ENCODE measurements at regions of chr5 and their contacts with region 1.

Region 1: DNA sequence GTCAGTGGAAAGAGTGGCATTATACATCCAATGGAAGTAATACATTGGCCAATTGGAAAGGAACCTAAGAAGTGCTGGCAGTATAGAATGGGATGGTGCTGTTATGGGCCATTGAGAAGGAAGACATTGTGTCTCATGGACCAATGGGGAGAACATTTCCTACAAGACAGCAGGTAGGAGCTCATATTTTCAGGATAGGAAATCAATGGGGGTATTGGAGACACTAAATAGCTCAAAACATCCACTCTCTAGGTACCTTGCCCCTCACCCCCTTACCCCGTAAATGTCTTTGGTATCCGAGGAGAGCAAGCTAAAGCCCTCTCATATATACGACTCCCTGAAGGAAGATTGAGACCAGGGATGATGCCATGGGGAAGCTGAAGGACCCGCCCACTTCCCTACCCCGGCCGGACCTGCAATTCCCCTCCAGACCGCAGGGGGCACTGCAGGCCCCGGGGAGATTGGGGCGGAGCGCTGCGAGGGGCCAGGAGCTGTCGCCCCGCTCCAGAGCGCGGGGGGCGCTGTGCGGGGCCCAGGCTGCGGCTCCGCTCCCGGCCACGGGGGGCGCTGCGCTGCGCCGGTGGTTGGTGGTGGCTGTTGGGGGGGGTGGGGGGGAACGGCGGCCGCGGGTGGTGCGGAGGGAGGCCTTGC is at the start of gene KDM3B:
- DNase-seq: peak; percentile 99
- H3K4me3 ChIP-seq: peak within 1 kb of the TSS; percentile 81 to 92
- H3K27ac ChIP-seq: peak within 1 kb of the TSS; percentile 81 to 84
- H3K4me1 ChIP-seq: peaks cover 7 to 9% of the 10 kb centered on the region in 2 experiments; a peak in 3 of 4 replicates
- H3K27me3 ChIP-seq: no peaks in the 10 kb centered on the region
- CTCF ChIP-seq: peak; percentile 99
- EP300 ChIP-seq: no peak
- RAD21 ChIP-seq: peak; percentile 18; the same call in 1 of the 2 replicates
- polyA plus RNA-seq, gene KDM3B: 22.4 and 24.5 TPM in 2 replicates

Region 2: DNA sequence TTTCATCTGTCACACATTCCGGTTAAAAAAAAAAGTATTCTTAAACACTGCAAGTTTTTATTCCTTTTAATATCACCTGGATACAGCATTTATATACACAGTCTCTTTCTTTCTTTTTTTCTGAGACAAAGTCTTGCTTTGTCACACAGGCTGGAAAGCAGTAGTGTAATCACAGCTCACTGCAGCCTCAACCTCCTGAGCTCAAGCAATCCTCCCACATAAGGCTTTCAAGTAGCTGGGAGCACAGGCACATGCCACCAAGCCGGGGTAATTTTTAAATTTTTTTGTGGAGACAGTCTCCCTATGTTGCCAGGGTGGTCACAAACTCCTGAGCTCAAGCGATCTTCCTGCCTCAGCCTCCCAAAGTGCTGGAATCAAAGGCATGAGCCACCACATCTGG is 159.4 kb before region 1 on chr5:
- CTCF ChIA-PET with region 1: interaction called, 12 read pairs
- POLR2A ChIA-PET with region 1: no interaction called
- DNase-seq: no peak
- H3K4me3 ChIP-seq: no peak overlapping the region
- H3K27ac ChIP-seq: no peak overlapping the region
- H3K4me1 ChIP-seq: no peaks in the 10 kb centered on the region
- H3K27me3 ChIP-seq: no peaks in the 10 kb centered on the region
- CTCF ChIP-seq: no peak
- EP300 ChIP-seq: no peak
- RAD21 ChIP-seq: no peak

Region 3: GRCh38 chr5:138241688-138242571 is 110.3 kb before region 1 on chr5:
- CTCF ChIA-PET with region 1: interaction called, 18 read pairs
- POLR2A ChIA-PET with region 1: interaction called, 3 read pairs
- DNase-seq: peak; percentile 87
- H3K4me3 ChIP-seq: peak overlapping the region; percentile 44 to 52
- H3K27ac ChIP-seq: no peak overlapping the region
- H3K4me1 ChIP-seq: peaks cover 0 to 10% of the 10 kb centered on the region in 2 experiments; a peak in 1 of 4 replicates
- H3K27me3 ChIP-seq: peaks cover 16% of the 10 kb centered on the region; the same call in 1 of the 2 replicates
- CTCF ChIP-seq: no peak
- EP300 ChIP-seq: no peak
- RAD21 ChIP-seq: no peak

Region 4: DNA sequence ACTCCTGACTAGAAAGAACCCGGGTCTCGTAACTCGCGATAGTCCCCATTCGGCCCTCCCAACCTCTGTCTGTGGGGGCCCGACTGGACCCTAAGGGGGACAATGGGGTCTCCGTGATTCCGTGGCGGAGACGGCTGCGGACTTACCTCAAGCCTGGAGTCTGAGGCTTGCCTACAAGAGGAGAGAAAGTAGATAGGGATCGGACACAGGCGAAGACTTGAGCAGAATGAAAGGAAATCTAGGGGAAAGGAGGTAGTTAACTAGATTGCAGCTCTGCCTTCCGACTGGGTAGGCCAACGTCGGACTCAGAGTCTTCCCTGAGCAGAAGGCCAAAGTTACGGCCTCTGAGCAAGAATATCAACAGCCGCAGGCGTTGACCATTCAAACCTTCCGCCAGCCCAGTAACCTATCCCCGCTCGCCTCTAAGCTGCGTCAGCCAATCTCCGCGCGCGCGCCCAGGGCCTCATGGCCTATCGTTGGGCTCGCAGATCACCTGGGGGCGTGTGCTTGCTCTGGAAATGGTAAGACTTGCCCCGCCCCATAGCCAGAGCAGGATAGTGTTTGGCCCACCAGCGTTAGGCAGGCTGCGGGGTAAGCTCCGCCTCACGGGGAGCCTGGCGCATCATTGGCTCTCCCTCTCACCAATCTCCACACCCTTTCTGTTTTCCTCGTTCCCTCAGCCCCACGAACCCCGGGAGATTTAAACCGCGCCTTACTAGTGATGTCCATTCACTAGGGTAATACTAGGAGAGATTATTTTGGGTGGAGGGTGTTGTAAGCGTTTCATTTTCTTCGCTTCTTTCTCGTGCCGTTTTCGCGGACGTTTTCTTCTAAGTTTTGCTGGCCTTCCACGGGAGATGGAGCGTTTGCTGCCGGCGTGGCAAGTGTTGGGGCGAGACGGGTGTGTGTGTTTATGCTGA is 20.5 kb before region 1 on chr5 and contains the start of gene CDC25C:
- CTCF ChIA-PET with region 1: interaction called, 239 read pairs
- POLR2A ChIA-PET with region 1: interaction called, 4 read pairs
- DNase-seq: peak; percentile 92
- H3K4me3 ChIP-seq: peak within 1 kb of the TSS; percentile 69 to 95
- H3K27ac ChIP-seq: peak within 1 kb of the TSS; percentile 17 to 56; a peak in 3 of 4 replicates
- H3K4me1 ChIP-seq: peaks cover 0 to 10% of the 10 kb centered on the region in 2 experiments; a peak in 1 of 4 replicates
- H3K27me3 ChIP-seq: no peaks in the 10 kb centered on the region
- CTCF ChIP-seq: no peak
- EP300 ChIP-seq: no peak
- RAD21 ChIP-seq: no peak
- polyA plus RNA-seq, gene CDC25C: 4.9 and 5.2 TPM in 2 replicates

Region 5: GRCh38 chr5:138386290-138386689 is 34.1 kb after region 1 on chr5:
- CTCF ChIA-PET with region 1: interaction called, 16 read pairs
- POLR2A ChIA-PET with region 1: no interaction called
- DNase-seq: no peak
- H3K4me3 ChIP-seq: no peak overlapping the region
- H3K27ac ChIP-seq: no peak overlapping the region; a peak in 1 of 4 replicates
- H3K4me1 ChIP-seq: peaks cover 0 to 5% of the 10 kb centered on the region in 2 experiments; a peak in 1 of 4 replicates
- H3K27me3 ChIP-seq: no peaks in the 10 kb centered on the region
- CTCF ChIP-seq: no peak
- EP300 ChIP-seq: no peak
- RAD21 ChIP-seq: no peak

Region 6: DNA sequence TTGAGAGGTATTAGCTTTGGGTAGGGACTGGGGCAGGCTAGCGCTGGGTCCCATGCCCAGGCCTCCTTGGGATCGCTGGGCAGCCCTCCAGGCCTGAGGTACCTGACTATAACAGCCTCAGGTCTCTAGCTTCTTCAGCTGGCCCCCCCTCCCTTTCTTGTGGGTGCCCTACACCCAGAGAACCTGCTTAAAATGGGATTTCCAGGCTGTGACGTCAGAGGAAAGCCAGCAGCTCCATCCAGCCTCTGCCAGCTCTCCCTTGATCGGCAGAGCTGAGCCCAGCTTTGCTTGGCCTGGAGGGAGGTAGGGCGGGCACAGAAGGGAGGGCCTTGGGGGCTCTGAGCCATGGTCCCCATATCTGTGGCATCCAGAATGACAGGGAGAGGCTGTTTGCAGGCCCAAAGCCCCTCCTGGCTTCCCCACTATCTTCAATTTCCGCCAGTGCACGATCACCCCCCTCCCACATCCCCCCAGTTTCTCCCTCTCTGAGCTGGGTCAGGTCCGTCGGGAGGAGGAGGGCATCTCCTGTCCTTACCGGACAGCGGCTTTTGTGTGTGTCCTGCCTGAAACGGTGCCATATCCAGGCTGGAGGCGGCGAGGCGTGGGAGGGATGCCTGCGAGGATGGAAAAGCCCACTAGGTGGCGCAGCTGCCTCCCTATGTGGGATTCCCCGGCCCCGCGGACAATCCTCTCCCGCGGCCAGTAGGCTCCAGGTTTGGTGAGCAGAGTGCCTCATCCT is 97.5 kb after region 1 on chr5:
- CTCF ChIA-PET with region 1: interaction called, 10 read pairs
- POLR2A ChIA-PET with region 1: interaction called, 5 read pairs
- DNase-seq: peak; percentile 96
- H3K4me3 ChIP-seq: peak overlapping the region in 1 of 2 experiments; percentile 34; a peak in 1 of 4 replicates
- H3K27ac ChIP-seq: peak overlapping the region in 1 of 2 experiments; percentile 8; a peak in 1 of 4 replicates
- H3K4me1 ChIP-seq: peaks cover 13 to 19% of the 10 kb centered on the region in 2 experiments; a peak in 3 of 4 replicates
- H3K27me3 ChIP-seq: no peaks in the 10 kb centered on the region
- CTCF ChIP-seq: peak; percentile 91
- EP300 ChIP-seq: no peak
- RAD21 ChIP-seq: peak; percentile 89

Measured in SK-N-SH (cell line).